ENCODE measurements at regions of chr9 and their contacts with region 1.

Region 1: DNA sequence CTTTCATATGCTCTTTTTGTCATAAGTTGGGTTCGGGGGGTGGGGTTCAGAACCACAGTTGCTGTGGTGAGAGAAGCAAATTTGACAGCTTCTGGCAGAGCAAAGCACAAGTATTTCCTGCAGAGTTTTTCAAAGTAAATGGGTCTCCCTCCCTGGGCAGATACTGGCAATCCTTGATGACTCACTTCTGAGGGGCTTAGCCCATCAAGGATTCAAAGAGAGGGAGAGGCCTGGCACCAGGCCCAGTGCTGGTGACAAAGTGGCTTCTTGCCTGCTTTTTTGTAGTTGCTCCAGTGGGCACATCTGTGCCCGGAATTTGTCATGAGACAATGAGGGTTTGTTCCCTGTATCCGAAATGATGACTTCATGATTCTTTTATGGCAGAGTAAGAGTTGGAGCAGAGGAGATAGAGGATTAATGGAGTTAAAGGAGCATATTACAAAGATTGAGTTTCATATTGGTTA is 46.6 kb upstream of the TNC start:
- DNase-seq: peak; percentile 99
- H3K4me3 ChIP-seq: no peak overlapping the region
- H3K27ac ChIP-seq: peak overlapping the region; percentile 66
- H3K4me1 ChIP-seq: peaks cover 14% of the 10 kb centered on the region
- H3K27me3 ChIP-seq: no peaks in the 10 kb centered on the region
- CTCF ChIP-seq: no peak

Region 2: GRCh38 chr9:115132648-115133047 is 31.9 kb before region 1 on chr9:
- CTCF ChIA-PET with region 1: no interaction called
- POLR2A ChIA-PET with region 1: interaction called, 22 read pairs
- intact Hi-C with region 1: no loop called
- DNase-seq: no peak
- H3K4me3 ChIP-seq: no peak overlapping the region
- H3K27ac ChIP-seq: no peak overlapping the region
- H3K4me1 ChIP-seq: peaks cover 6% of the 10 kb centered on the region
- H3K27me3 ChIP-seq: no peaks in the 10 kb centered on the region
- CTCF ChIP-seq: no peak